Activated T-helper 1 cell treated with anti-CD3 and anti-CD28 coated beads, Interleukin-12 subunit alpha, Interleukin-12 subunit beta, Interleukin-2, Interleukin-4 antibody, amounts not matched to agents 30 ng/mL and 10 ng/mL and 1 ng/mL, durations not matched to agents 14 hours and 24 hours and 36 hours (primary cell): ENCODE measurements at regions of chr2 and their contacts with region 1.

Region 1: GRCh38 chr2:202634556-202635427 is at the start of gene FAM117B:
- DNase-seq: peak; percentile 98
- H3K4me3 Mint-ChIP-seq: peak within 1 kb of the TSS; percentile 91
- H3K27ac Mint-ChIP-seq: peak within 1 kb of the TSS; percentile 89
- H3K4me1 Mint-ChIP-seq: peaks cover 45% of the 10 kb centered on the region
- H3K27me3 Mint-ChIP-seq: no peaks in the 10 kb centered on the region
- total RNA-seq, gene FAM117B: 9.3 and 9.5 TPM in 2 replicates

Region 2: GRCh38 chr2:201257956-201258665 is 1376.7 kb before region 1 on chr2:
- intact Hi-C with region 1: loop called (anchors 10 kb)
- DNase-seq: peak; percentile 93
- H3K4me3 Mint-ChIP-seq: peak overlapping the region; percentile 91
- H3K27ac Mint-ChIP-seq: peak overlapping the region; percentile 100
- H3K4me1 Mint-ChIP-seq: peaks cover 84% of the 10 kb centered on the region
- H3K27me3 Mint-ChIP-seq: no peaks in the 10 kb centered on the region

Region 3: GRCh38 chr2:202588647-202589581 is 45.9 kb before region 1 on chr2:
- intact Hi-C with region 1: loop called (anchors 1 kb)
- DNase-seq: peak; percentile 49
- H3K4me3 Mint-ChIP-seq: no peak overlapping the region
- H3K27ac Mint-ChIP-seq: no peak overlapping the region
- H3K4me1 Mint-ChIP-seq: peaks cover 7% of the 10 kb centered on the region
- H3K27me3 Mint-ChIP-seq: no peaks in the 10 kb centered on the region

Region 4: DNA sequence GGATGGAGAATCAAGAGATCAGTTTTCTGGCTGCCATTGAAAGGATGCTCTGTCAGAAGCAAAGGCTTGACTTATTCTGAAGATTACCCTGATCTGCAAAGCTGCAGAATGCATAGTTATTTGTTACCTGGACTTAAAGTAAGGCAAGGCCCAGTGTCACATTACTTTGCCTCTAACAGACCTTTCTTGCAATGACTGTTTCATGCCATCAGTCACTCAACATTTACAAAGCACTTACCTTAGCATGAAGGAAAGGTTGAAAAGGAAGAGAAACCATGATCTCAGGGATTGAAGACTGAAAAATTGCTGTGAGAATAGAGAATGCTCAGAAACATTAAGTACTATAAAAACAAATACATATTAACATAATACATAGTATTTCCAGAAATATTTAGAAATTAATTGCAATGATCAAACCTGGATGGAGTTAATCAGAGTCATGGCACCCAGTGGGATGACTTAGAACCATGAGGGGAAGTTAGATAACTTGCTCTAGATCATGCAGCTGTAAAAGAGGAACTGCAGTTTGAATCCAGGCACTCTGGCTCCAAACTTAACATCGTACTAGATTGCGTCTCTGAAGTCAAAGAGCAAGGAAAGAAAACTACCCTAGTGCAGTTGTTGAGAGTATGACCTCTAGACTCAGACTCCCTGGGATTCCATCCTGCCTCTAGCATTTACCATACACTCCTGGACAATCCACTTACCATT is 26.5 kb before region 1 on chr2:
- intact Hi-C with region 1: no loop called
- DNase-seq: no peak
- H3K4me3 Mint-ChIP-seq: no peak overlapping the region
- H3K27ac Mint-ChIP-seq: no peak overlapping the region
- H3K4me1 Mint-ChIP-seq: peaks cover 11% of the 10 kb centered on the region
- H3K27me3 Mint-ChIP-seq: no peaks in the 10 kb centered on the region

Region 5: DNA sequence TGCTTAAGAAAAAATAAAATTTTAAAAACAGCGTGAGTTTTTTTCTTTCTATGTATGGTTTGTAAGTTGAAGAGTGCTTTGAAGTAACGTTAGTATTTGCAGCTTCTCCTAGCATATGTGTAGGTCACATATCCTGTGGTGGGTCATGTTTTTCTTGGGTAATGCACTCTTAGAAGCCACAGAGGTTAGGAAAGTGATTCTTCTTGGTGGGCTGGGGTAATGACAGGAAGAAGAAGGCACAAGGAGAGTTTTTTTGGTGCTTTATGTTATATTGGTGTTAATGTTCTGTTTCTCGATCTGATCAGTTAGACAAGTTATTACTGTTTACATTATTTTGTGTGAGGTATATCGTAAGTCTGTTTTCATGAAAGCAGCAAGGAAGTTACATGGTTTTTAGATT is 127.8 kb after region 1 on chr2:
- intact Hi-C with region 1: loop called (anchors 2 kb)
- DNase-seq: no peak
- H3K4me3 Mint-ChIP-seq: peak overlapping the region; percentile 1
- H3K27ac Mint-ChIP-seq: peak overlapping the region; percentile 9
- H3K4me1 Mint-ChIP-seq: peaks cover 23% of the 10 kb centered on the region
- H3K27me3 Mint-ChIP-seq: no peaks in the 10 kb centered on the region

Region 6: DNA sequence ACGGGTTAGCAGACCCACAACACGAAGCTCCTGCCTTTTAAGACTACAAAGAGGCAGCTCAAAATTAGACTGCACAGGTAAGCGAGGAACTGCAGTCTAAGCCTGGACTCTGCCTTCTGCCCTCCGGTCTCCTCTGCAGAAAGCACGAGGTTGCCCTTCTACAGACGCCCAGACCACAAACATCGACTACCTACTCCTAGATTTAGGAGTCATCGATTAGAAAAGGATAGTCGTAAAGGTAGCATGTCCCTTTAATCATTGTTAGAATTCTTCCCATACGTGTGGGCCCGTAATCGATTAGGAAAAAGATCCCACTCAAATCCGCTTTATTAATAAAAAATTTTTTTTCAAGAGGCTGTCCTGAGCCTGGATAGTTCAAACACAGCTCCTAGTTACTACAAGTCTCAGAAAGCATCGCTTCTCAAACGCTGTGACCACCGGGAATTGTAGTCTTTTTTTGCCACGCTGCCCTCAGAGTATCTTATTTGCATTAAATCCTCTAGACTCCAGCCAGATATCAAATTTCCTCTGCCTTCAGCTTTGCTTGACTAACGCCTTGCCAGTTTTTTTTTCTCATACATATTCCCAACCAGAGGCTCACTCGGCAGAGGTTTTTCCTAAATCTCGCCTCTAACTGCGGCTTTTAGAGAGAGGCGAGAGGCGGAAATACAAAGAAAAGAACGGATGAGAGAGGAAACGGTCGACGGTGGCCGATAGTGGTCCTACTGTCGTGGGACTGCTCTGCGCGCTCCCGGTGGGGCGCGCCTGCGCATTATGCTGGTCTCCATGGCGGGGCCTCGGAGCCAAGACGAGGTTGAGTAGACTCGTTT is 276.9 kb after region 1 on chr2 and contains the starts of genes CARF and WDR12:
- intact Hi-C with region 1: loop called (anchors 1 kb)
- DNase-seq: peak; percentile 87
- H3K4me3 Mint-ChIP-seq: peak within 1 kb of the TSS; percentile 96
- H3K27ac Mint-ChIP-seq: peak within 1 kb of the TSS; percentile 98
- H3K4me1 Mint-ChIP-seq: peaks cover 31% of the 10 kb centered on the region
- H3K27me3 Mint-ChIP-seq: no peaks in the 10 kb centered on the region
- total RNA-seq, gene CARF: 3.6 and 4.3 TPM in 2 replicates
- total RNA-seq, gene WDR12: 149 and 165 TPM in 2 replicates

Region 7: GRCh38 chr2:203871371-203871983 is 1236.7 kb after region 1 on chr2:
- intact Hi-C with region 1: loop called (anchors 10 kb)
- DNase-seq: peak; percentile 67
- H3K4me3 Mint-ChIP-seq: peak overlapping the region; percentile 95
- H3K27ac Mint-ChIP-seq: peak overlapping the region; percentile 99
- H3K4me1 Mint-ChIP-seq: peaks cover 82% of the 10 kb centered on the region
- H3K27me3 Mint-ChIP-seq: no peaks in the 10 kb centered on the region